Psoas muscle (tissue), 8 donors: ENCODE measurements at regions of chr15 and their contacts with region 1.

Region 1: DNA sequence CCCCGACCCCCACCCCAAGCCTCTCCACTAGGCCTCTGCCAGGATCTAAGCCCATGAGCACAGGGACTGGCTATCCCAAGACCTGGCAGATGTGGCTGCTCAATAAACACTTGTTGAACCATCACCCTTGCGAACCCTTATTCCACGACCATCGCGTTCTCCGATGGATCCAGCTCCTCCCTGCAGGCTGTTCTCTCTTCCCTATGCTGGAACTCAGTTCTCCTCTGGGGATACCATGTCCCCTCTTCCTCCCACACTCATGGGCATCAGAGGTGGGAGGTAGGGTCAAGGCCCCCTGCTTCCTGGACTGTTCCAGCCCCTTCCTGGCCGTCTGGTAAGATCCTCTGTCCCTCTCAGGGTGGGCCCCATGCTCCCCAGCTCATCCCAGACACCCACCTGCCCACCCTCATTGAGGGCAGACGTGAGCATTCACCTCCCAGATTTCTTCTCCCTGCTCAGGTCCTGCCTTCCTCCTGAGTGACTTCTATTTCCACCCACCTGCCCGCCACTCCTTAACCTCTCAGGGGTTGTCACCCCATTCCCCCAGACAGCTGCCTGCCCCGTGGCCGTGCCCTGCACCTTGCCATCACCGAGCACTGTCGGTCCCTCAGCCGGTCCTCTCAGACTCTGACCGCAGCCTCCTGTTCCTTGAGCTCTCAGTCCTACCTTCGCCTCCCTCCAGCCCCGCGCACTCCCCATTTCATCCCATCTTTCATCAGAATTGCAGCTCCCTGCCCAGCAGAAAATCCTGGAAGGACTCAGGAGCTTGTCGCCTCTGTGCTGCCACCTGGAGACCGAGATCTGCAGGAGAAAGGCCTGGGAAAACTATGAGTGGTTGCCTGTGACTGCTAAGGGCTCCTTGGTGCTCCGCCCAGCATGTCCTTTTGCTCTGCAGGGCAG is 42.0 kb downstream of the PML start:
- DNase-seq: no peak
- ATAC-seq: no peak
- H3K4me3 ChIP-seq: no peak overlapping the region
- H3K27ac ChIP-seq: no peak overlapping the region
- H3K4me1 ChIP-seq: no peaks in the 10 kb centered on the region
- H3K27me3 ChIP-seq: no peaks in the 10 kb centered on the region
- CTCF ChIP-seq: peak; percentile 34

Region 2: DNA sequence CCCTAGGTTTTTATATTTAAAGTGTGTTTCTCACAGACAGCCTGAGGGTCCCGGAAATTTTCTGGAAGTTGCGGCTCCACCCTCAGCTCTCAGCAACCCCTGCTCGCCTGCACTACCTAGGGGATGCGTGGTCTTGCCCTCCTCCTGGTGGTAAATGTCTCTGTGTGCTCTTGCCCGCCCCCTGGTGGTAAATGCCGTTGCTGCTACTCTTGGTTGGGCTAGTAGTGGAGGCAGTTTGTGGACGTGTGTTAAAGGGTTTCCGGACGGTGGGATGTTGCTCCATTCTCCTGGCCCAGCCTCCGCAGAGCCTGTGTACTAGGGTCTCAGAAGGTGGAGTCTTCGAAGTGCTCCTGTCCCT is 71.8 kb before region 1 on chr15:
- intact Hi-C with region 1: loop called in 1 of 2 experiments (anchors 5 kb)
- DNase-seq: peak; percentile 84 to 87
- ATAC-seq: peak; percentile 84 to 96 (median 94)
- H3K4me3 ChIP-seq: no peak overlapping the region
- H3K27ac ChIP-seq: no peak overlapping the region
- H3K4me1 ChIP-seq: no peaks in the 10 kb centered on the region
- H3K27me3 ChIP-seq: no peaks in the 10 kb centered on the region
- CTCF ChIP-seq: peak; percentile 90

Region 3: DNA sequence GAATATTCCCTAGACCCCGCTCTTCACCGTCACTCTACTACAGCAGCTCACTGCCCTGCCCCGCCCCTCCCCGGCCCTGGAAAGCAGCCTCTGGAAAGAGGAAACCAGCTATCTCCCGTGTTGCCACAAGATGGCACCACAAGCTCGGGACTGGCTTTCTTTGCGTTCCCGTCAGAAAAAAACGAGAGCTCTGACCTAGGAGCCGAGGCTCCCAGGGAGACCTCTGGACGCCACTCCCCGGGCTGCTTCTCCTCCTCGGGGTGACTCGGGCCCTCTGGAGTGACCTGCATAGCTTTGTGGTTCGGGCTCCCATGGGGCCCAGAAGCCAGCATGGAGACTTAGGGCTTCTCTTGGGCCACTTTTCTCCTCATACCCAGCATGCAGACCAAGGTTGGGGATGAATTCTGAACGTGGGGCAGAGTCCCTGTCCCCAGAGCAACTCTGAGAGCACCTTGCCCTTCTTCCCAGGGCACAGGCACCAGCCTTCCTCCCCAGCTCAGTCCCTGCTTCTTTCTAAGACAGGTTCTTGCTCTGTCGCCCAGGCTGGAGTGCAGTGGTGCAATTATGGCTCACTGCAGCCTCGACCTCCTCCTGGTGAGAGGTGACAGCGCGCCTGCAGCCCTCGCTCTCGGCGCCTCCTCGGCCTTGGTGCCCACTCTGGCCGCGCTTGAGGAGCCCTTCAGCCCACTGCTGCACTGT is 63.4 kb before region 1 on chr15:
- intact Hi-C with region 1: loop called (anchors 2 to 5 kb)
- DNase-seq: peak; percentile 86 to 90
- ATAC-seq: peak; percentile 90 to 98 (median 94)
- H3K4me3 ChIP-seq: peak overlapping the region; percentile 32
- H3K27ac ChIP-seq: no peak overlapping the region
- H3K4me1 ChIP-seq: no peaks in the 10 kb centered on the region
- H3K27me3 ChIP-seq: no peaks in the 10 kb centered on the region
- CTCF ChIP-seq: peak; percentile 77

Region 4: DNA sequence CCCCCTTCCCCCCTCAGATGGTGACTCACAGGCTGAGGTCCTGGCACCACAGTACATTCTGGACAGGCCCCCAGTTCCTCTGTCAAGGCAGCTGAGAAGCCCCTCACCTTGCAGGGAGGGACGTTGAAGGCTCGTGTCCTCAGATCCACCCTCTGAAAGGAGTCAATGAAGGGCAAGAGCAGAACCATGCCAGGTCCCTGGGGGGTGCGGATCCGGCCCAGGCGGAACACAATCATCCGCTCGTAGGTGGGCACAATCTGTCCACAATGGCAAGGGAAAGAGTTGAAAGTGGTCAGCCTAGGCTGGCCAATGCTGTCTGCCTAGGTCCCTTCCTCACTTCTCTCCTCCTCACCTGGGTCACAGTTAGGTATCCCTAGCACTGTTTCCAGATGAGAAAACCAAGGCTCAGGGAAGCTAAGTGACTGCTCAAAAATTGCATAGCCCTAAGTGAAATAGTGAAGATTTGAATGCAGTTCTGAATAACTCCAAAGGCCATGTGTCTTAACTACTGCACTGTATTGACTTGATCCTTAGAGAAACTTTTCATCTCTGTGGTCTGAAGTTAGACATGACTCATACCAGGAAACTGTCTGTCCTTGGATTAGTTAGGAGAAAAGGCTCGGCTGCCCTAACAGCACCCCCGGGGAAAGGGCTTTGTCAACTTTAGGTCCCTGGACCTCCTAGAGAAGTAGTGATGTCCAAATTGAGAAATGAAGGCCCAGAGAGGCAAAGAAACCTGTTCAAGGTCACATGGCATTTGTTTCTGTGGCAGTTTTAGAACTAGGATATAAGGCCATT is 47.3 kb before region 1 on chr15:
- intact Hi-C with region 1: loop called in 1 of 2 experiments (anchors 5 kb)
- DNase-seq: peak in 1 of 2 donors; percentile 38
- ATAC-seq: no peak
- H3K4me3 ChIP-seq: no peak overlapping the region
- H3K27ac ChIP-seq: peak overlapping the region; percentile 91
- H3K4me1 ChIP-seq: peaks cover 58% of the 10 kb centered on the region
- H3K27me3 ChIP-seq: no peaks in the 10 kb centered on the region
- CTCF ChIP-seq: no peak